ENCODE measurements at regions of chr18 and their contacts with region 1.

Region 1: DNA sequence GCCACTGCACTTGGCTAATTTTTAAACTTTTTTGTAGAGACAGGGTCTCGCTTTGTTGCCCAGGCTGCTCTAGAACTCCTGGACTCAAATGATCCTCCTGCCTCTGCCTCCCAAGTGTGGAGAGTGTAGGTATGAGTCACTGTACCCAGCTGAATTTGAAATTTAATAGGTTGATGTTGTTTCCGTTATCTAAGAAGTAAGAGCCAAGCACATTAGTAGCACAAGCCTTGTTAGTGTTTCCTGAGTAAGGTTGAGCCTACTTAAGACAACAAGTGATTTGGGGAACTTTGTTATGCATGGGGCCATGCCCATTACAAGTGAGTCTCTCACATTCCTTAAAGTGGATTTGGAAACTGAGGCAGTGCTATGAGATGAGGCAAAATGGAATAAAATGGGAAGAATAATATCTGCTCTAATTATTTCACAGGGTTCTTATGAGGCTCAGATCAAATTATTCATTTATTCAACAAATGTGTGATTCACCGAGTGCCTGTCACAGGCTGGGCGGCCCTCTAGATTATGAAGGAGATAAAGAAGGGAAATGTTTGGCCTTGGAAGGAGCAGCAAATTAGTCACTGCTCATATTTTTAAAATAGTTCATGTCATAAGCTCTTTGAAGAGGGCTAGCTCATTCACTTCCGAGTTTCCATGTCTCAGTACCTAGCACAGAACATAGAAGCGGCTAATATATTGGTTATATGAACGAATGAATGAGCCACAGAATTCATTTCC is 217.2 kb downstream of the LDLRAD4 start:
- DNase-seq: peak; percentile 57 to 90
- H3K4me3 ChIP-seq: no peak overlapping the region
- H3K27ac ChIP-seq: peak overlapping the region; percentile 86 to 91
- H3K4me1 ChIP-seq: peaks cover 3 to 50% of the 10 kb centered on the region in 2 donors
- H3K27me3 ChIP-seq: no peaks in the 10 kb centered on the region
- CTCF ChIP-seq: no peak

Region 2: DNA sequence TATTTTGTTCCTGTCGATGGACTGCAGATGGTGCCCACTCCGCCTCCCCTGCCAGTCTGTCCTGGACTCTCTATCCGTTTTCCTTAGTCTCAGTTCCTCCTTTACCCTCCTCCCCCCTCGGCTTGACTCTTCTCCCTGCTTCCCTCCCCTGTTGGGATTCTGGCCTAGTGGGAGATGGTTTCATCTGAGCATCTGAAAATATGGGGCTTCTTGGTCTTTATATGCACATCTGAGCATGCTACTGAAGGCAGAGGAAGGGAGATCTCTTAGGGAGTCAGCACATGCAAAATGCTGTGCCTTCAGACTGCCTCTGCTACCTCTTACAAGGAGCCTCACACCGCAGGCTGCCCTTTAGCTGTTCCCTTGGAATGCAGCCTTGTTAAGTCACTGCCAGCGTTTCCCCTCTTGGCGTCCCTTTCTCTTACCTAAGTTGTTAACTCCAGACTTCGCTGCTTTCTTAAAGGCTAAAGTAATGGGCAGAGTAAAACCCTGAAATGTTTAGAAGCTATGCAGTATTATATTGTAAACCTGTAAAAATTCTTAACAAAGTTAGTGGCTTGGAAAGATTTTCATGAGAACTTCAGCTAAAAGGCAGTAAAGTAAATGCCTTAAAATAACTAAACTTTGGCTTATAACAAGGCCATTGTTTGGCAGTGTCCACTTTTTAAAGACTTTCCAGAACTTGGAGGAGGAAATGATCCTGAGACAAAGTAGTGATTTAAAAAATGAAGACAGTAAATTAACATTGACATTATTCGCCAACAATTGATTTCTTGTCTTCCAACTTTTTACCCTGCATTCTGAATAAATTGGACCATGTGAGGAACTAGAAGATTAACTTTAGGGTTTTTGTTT is 167.4 kb before region 1 on chr18:
- intact Hi-C with region 1: loop called (anchors 5 kb)
- DNase-seq: peak in 1 of 2 donors; percentile 82
- H3K4me3 ChIP-seq: peak overlapping the region in 1 of 2 donors; percentile 4
- H3K27ac ChIP-seq: peak overlapping the region; percentile 71 to 72
- H3K4me1 ChIP-seq: peaks cover 48 to 64% of the 10 kb centered on the region in 2 donors
- H3K27me3 ChIP-seq: no peaks in the 10 kb centered on the region
- CTCF ChIP-seq: no peak

Region 3: DNA sequence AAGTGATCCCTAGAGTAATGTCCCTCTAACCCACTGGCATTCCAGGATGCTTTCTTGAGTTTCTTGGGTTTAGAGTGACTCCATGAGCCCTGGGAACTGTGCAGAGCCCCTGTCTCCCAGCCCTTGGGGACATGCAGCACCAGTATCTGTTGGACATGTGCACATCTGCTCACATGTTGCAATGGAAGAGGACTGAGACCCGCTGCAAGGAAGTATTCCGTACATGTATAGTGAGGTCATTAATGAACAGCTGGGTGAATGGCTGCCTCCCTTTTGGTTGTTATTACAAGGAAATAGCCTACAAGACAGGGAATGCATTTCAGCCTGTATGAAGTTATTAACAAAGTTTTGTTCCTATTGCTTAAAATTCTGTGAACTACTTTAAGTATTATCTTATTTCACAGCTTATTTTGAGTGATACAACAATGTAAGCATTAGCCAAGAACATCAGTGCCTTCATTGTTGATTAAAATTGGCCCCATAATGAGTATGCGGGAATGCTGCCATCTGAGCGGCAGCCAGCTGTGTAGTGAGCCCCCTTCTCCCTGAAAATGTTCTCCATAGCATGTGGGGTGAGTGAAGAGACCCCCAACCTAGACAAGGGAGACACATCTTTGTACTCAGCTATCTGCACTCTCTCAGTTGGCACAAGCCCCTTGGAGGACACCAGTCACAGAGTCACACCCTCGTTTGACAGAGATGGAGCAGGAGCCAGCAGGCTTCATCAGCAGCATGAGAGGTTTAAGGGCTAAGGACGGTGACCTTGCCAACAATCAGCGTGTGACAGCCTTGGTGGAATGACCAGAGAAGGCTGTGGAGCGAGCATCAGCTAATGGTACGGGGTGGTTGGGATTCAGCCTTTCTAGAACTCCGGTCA is 203.2 kb after region 1 on chr18:
- intact Hi-C with region 1: no loop called
- DNase-seq: no peak
- H3K4me3 ChIP-seq: no peak overlapping the region
- H3K27ac ChIP-seq: no peak overlapping the region
- H3K4me1 ChIP-seq: peaks cover 0 to 6% of the 10 kb centered on the region in 2 donors
- H3K27me3 ChIP-seq: no peaks in the 10 kb centered on the region
- CTCF ChIP-seq: no peak